ENCODE measurements at regions of chr2 and their contacts with region 1.

Region 1: GRCh38 chr2:131093006-131093695 is at the start of gene FAM168B:
- DNase-seq: peak; percentile 91
- H3K4me3 Mint-ChIP-seq: peak within 1 kb of the TSS; percentile 87
- H3K27ac Mint-ChIP-seq: peak within 1 kb of the TSS; percentile 91
- H3K4me1 Mint-ChIP-seq: peaks cover 26% of the 10 kb centered on the region
- H3K27me3 Mint-ChIP-seq: peaks cover 2% of the 10 kb centered on the region
- total RNA-seq, gene FAM168B: 44.4 to 44.5 TPM

Region 2: DNA sequence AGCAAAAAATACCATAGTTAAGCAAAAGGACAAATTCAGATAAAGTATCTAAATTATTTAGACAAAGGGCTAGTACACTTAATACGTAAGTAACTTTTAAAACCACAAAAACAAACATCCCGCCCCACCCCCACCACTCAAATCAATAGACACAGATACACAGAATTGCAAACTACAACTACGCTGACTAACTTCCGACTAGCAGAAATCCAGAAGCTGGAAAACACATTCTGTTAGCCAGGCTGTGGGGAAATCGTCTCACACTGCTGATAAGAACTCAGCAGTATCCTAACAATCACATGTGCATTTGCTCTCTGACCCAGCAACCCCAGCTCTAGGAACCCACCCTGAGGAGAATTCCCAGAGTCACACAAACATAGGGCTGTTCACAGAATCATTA is 16.4 kb before region 1 on chr2:
- CTCF ChIA-PET with region 1: no interaction called
- POLR2A ChIA-PET with region 1: interaction called, 10 read pairs
- DNase-seq: no peak
- H3K4me3 Mint-ChIP-seq: no peak overlapping the region
- H3K27ac Mint-ChIP-seq: no peak overlapping the region
- H3K4me1 Mint-ChIP-seq: peaks cover 24% of the 10 kb centered on the region
- H3K27me3 Mint-ChIP-seq: no peaks in the 10 kb centered on the region

Region 3: DNA sequence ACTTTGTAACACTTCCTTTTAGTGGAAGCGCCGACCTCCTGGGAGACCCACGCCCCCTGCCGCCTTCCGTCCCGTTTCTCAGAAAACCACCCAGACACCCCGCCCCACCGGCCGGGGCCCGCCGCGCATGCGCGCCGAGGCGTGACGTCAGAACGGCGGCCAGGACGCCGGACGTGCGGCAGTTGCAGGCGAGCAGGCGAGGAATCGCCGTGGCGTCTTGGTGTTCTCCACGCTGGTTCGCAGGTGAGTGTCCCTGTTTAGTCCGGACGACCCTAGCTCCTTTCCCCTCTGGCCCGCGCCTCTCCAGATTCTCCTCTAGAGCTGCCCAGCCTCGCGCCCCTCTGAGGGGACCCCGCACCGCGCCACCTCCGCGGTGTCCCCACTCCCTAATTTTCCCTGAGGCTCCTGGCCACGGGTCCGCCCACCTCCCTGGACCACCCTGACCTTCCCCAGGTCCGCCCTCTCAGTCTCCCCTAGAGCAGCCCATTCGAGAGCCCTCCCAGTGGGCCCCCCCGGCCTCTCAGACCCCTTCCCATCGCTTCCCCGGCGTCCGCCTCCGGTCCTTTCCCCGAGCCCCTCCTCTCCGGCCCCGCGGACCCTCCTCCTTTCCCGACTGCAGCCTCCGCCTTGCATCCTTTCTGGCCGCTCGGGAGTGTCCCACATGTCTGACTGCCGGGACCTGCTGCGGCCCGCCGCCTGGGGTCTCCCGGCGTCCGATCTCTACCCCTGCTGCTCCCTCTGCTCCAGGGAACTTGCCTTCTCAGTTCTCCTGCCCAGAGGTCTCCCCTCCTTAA is 12.2 kb after region 1 on chr2 and contains the start of gene PLEKHB2:
- CTCF ChIA-PET with region 1: interaction called, 24 read pairs
- POLR2A ChIA-PET with region 1: interaction called, 115 read pairs
- DNase-seq: peak; percentile 95
- H3K4me3 Mint-ChIP-seq: peak within 1 kb of the TSS; percentile 86
- H3K27ac Mint-ChIP-seq: peak within 1 kb of the TSS; percentile 93
- H3K4me1 Mint-ChIP-seq: peaks cover 49% of the 10 kb centered on the region
- H3K27me3 Mint-ChIP-seq: no peaks in the 10 kb centered on the region
- total RNA-seq, gene PLEKHB2: 72.0 to 73.0 TPM

Region 4: DNA sequence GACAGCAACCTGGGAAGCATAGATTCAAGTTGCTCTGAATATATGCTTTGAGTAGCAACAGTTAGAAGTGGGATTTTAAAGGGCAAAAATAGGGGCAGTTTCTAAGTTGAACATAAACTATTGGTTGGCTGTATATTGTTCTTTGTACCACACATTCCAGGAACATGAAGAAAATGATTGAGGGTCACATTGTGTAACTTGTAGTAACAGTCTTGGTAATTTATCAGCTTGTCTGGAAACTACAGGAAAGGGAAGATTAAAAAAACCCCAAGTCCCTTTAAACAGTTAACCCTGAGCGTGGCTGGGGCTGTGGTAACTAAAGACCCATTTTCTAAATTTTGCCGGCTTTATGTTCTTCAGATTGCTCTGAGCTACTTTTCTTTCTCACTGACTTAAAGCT is 19.4 kb after region 1 on chr2:
- CTCF ChIA-PET with region 1: interaction called, 3 read pairs
- POLR2A ChIA-PET with region 1: interaction called, 115 read pairs
- DNase-seq: no peak
- H3K4me3 Mint-ChIP-seq: no peak overlapping the region
- H3K27ac Mint-ChIP-seq: no peak overlapping the region
- H3K4me1 Mint-ChIP-seq: peaks cover 60% of the 10 kb centered on the region
- H3K27me3 Mint-ChIP-seq: no peaks in the 10 kb centered on the region

Measured in activated CD4-positive, alpha-beta memory T cell treated with anti-CD3 and anti-CD28 coated beads, Interleukin-2, amount 10 ng/mL, durations not matched to agents 7 days and 5 days (primary cell).